HAP-1 (cell line): ENCODE measurements at regions of chr2 and their contacts with region 1.

Region 1: DNA sequence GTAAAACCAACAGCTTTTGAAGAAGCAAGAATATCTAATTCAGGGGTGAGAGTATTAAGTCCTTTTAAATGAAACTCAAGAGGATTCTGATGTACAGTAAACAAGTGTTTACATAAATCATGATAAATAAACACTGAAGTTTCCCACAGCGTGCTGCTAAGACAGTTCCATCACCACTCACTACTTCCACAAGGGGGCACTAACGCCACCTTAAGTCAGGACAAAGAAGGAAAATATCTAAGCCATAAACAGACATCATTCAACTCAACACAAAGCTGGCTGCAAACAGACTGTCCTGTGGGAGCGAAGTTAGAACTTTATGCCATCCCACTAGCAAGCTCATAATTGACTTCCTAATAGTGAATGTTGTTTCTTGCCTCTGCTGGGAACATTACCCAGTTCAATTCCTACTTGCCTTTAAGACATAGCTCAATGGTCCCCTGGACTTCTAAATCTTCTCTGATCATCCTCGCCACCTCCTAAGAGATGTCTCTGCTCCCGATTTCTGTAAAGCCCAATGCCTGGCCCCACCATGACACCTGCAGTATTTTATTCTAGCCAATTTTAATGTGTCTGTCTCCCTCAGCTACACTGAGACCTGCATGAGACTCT is 36.5 kb downstream of the MRPL44 start:
- DNase-seq: peak; percentile 65 to 74
- H3K4me3 ChIP-seq: no peak overlapping the region
- H3K4me1 ChIP-seq: no peaks in the 10 kb centered on the region
- H3K27me3 ChIP-seq: no peaks in the 10 kb centered on the region

Region 2: DNA sequence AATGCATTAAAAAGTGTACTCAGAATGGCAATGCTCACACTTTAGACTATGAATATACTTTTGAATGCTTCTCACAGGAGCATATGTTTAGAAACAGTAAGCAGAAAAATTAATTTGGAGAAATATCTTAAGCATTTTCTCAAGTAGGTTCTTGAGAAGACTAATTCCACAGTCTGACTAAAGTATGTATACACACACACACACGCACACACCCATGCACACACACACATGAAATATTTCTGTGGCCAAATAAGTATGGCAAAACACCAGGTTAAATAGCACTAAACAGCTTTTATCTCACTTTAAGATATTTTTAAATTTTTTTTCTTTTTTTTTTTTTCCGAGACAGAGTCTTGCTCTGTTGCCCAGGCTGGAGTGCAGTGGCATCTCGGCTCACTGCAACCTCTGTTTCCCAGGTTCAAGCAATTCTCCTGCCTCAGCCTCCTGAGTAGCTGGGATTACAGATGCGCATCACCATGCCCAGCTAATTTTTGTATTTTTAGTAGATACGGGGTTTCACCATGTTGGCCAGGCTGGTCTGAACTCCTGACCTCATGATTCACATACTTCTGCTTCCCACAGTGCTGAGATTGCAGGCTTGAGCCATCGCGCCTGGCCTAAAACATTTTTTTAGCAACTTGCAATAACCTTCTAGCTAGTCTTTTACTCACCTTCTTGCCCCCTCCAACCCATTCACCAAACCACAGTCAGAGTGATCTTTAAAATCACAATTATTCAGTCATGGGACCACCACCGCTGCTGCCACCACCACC is 324.1 kb before region 1 on chr2:
- in situ Hi-C with region 1: no loop called
- DNase-seq: no peak
- H3K4me3 ChIP-seq: no peak overlapping the region
- H3K4me1 ChIP-seq: peaks cover 3% of the 10 kb centered on the region
- H3K27me3 ChIP-seq: no peaks in the 10 kb centered on the region

Region 3: DNA sequence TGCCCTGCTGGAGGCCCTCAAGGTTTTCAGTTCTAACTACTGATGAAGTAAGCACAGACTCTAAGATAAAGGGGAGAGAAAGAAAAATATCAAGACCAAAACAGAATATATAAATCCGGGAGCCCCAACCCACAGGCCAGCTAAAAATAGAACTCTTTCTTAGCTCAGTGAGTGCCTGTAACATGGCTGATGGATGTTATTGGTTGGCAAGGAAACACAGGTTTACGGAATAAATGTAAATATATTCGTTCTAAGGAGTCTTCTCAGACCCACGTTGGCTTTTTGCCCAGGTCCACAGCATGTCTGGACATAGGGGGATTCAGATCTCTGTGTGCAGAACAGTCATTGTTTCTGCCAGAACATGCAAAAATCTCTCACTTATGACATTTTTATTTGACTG is 184.3 kb after region 1 on chr2:
- in situ Hi-C with region 1: no loop called
- DNase-seq: no peak
- H3K4me3 ChIP-seq: no peak overlapping the region
- H3K4me1 ChIP-seq: no peaks in the 10 kb centered on the region
- H3K27me3 ChIP-seq: no peaks in the 10 kb centered on the region

Region 4: DNA sequence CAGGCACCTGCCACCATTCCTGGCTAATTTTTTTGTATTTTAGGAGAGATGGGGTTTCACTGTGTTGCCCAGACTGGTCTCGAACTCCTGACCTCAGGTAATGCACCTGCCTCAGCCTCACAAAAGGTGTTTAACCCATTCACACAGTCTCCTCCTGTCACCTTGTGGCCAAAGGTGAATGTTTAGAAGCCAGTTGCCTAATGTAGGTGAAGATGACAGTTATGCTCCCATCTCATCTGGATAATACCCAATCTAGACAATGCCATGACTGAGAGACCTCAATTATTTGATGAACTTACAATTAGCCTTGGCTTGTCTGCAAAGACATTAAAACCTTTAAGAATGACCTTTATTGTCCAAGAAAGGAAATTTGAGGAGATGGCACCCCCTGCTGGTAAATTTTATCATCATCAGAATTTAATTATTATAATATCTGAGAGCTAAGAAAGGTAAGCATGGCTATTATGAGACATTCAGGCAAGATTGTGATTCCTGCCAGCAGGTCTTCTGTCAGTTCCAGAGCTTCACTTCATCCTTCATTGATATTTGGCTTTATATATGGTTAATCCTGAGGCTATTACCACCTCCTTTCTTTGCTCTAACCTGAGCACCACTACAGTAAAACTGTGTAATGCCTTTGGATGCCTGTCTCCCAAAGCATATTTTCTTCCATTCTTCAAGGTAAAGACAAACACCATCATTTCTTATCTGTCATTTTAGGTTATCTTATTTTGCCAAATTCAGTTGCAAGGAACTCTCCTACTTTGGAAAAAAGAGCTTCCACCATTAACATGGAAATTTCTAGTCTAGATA is 290.6 kb after region 1 on chr2:
- in situ Hi-C with region 1: loop called (anchors 10 kb)
- DNase-seq: peak; percentile 20 to 31
- H3K4me3 ChIP-seq: no peak overlapping the region
- H3K4me1 ChIP-seq: no peaks in the 10 kb centered on the region
- H3K27me3 ChIP-seq: peaks cover 6% of the 10 kb centered on the region

Region 5: DNA sequence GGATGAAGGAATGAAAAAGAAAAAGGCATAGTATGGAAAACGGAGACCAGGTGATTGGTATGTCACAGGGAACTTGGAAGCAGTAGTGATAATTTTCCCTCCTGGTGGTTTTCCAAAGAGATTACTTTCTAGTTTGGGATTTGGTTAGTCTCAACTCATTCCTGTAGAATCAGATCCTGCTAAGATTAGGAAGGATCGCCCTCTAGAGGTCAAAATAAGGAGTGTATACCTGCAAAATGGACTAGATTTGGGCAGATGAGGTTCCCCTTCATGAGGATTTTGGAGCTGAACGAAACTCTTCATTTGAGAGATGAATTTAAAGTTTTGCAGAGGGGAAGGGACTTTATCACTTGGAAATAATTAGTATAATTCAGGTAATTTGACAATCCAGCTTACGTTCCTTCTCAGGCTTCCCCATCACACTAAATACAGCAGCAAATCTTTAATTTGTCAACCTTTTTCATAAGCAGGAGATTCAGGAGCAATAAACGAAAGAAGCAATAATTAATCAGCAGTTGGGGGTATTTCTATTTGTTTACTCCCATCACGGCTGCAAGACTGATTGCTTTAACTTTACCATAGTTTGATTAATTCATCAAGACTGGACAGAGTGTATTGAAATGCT is 657.2 kb after region 1 on chr2:
- in situ Hi-C with region 1: loop called (anchors 25 kb)
- DNase-seq: peak; percentile 23 to 55
- H3K4me3 ChIP-seq: no peak overlapping the region
- H3K4me1 ChIP-seq: no peaks in the 10 kb centered on the region
- H3K27me3 ChIP-seq: 0 out of 2 replicates have a peak, but pooled peaks cover 4% of the 10 kb centered on the region